ENCODE measurements at regions of chr19 and their contacts with region 1.

Region 1: DNA sequence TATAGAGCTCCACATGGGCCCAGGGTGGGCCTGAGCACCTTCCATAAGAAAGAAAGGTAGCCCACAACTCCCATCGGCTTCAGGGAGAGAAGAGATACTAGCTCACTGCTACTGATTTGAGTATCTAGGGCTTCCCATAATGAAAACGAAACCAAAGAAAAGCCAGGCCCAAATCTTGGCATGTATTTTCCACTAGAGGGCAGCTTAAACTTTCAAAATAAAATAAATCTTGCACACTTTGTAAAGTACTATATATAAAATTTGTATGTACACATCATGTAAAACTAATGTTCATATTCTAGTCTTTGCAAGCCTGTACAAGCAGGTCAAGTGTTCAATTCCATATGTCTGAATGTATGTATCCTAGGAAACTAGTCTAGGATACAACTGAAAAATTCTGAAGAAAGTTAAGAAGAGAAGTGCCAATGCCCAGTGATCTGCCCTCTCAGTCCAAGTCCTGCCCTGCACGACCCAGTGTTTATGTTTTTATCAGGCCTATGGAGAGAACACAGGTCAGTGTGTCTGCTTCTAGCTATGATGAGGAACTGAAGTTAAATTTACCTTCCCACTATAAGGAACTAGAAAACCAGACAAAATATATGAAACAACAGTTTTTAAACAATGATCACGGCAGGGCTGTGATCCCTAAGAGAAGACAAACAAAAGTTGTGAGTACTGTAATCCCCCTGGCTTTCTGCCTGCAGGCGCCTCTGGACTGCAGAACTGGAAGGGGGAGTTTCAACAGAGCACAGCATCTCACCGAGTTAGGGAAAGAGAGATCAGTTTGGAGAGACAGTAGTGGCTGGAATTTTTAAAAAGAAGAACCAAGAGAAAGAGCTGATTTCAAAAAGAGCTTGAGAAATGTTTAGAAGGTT is 475.7 kb downstream of the UQCRFS1 start:
- DNase-seq: no peak
- ATAC-seq: peak in 1 of 4 donors; percentile 23
- H3K4me3 ChIP-seq: no peak overlapping the region
- H3K27ac ChIP-seq: no peak overlapping the region
- H3K4me1 ChIP-seq: no peaks in the 10 kb centered on the region
- H3K27me3 ChIP-seq: no peaks in the 10 kb centered on the region
- CTCF ChIP-seq: peak; percentile 63

Region 2: DNA sequence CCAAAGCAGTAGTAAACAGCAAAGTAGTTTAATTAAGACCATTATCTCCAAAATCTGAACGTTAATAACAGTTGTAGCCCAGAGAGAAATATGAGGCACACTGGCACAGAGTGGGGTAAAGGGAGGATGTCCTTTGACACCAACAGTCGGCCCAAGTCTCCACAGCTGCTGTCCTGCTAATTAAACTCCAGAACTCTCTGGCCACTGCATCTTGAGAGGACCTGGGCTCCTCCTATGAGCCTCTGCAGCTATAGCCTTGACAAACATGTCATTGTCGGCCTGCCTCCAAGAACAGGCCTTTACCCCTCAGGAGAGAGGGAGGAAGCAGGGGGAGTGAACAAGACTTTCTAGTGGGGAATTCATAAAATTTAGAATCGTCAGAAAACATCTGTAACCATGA is 694.7 kb before region 1 on chr19:
- intact Hi-C with region 1: no loop called
- DNase-seq: no peak
- ATAC-seq: no peak
- H3K4me3 ChIP-seq: no peak overlapping the region
- H3K27ac ChIP-seq: no peak overlapping the region
- H3K4me1 ChIP-seq: no peaks in the 10 kb centered on the region
- H3K27me3 ChIP-seq: no peaks in the 10 kb centered on the region
- CTCF ChIP-seq: no peak

Region 3: GRCh38 chr19:28878862-28879566 is 141.8 kb after region 1 on chr19:
- intact Hi-C with region 1: loop called in 1 of 2 experiments (anchors 2 kb)
- DNase-seq: peak; percentile 52 to 73
- ATAC-seq: peak in 3 of 4 donors; percentile 37 to 55 (median 46)
- H3K4me3 ChIP-seq: no peak overlapping the region
- H3K27ac ChIP-seq: no peak overlapping the region
- H3K4me1 ChIP-seq: no peaks in the 10 kb centered on the region
- H3K27me3 ChIP-seq: peaks cover 0 to 5% (median 0%) of the 10 kb centered on the region in 3 donors
- CTCF ChIP-seq: peak; percentile 77

Measured in psoas muscle (tissue), 8 donors.